ENCODE measurements at regions of chr10 and their contacts with region 1.

Region 1: GRCh38 chr10:124005991-124006392 is 87.4 kb downstream of the CHST15 start:
- DNase-seq: no peak
- H3K4me3 Mint-ChIP-seq: no peak overlapping the region
- H3K27ac Mint-ChIP-seq: no peak overlapping the region
- H3K4me1 Mint-ChIP-seq: peaks cover 4% of the 10 kb centered on the region
- H3K27me3 Mint-ChIP-seq: peaks cover 8% of the 10 kb centered on the region

Region 2: GRCh38 chr10:123994417-123995081 is 11.4 kb before region 1 on chr10:
- CTCF ChIA-PET with region 1: interaction called, 19 read pairs
- DNase-seq: peak; percentile 84
- H3K4me3 Mint-ChIP-seq: no peak overlapping the region
- H3K27ac Mint-ChIP-seq: no peak overlapping the region
- H3K4me1 Mint-ChIP-seq: peaks cover 5% of the 10 kb centered on the region
- H3K27me3 Mint-ChIP-seq: peaks cover 83% of the 10 kb centered on the region

Region 3: GRCh38 chr10:125248489-125248888 is 1242.5 kb after region 1 on chr10:
- CTCF ChIA-PET with region 1: no interaction called
- DNase-seq: no peak
- H3K4me3 Mint-ChIP-seq: no peak overlapping the region
- H3K27ac Mint-ChIP-seq: no peak overlapping the region
- H3K4me1 Mint-ChIP-seq: no peaks in the 10 kb centered on the region
- H3K27me3 Mint-ChIP-seq: no peaks in the 10 kb centered on the region

Measured in activated naive CD4-positive, alpha-beta T cell treated with anti-CD3 and anti-CD28 coated beads, Interleukin-2, amount 10 ng/mL, durations not matched to agents 7 days and 5 days (primary cell).